A673 (cell line): ENCODE measurements at regions of chr11 and their contacts with region 1.

Region 1: GRCh38 chr11:6705905-6706535 is 22.9 kb upstream of the MRPL17 start:
- DNase-seq: peak; percentile 77
- H3K4me3 ChIP-seq: no peak overlapping the region
- H3K27ac ChIP-seq: no peak overlapping the region
- H3K4me1 ChIP-seq: peaks cover 13% of the 10 kb centered on the region
- H3K27me3 ChIP-seq: no peaks in the 10 kb centered on the region
- CTCF ChIP-seq: peak; percentile 86

Region 2: DNA sequence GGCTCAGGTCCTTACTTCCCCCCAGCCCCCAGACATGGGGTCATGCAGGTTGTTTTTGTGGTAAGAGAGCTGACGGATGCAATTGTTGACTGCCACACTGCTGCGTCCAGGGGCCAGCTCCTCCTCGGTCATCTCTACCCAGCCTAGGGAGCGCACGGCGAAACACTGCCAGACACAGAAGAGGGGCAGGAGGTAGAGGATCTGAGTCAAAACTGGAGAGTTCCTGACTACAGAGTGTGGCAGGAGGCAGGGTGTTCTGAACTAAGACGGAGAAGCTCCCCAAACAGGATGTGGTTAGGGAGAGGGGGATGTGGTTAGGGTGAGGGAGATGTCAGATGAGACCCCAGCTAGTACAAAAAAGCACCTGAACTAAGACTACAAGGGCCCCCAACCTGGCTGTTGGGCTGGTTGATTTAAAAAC is 303.4 kb before region 1 on chr11:
- CTCF ChIA-PET with region 1: no interaction called
- POLR2A ChIA-PET with region 1: no interaction called
- intact Hi-C with region 1: no loop called
- DNase-seq: no peak
- H3K4me3 ChIP-seq: no peak overlapping the region
- H3K27ac ChIP-seq: no peak overlapping the region
- H3K4me1 ChIP-seq: peaks cover 11% of the 10 kb centered on the region
- H3K27me3 ChIP-seq: no peaks in the 10 kb centered on the region
- CTCF ChIP-seq: no peak

Region 3: GRCh38 chr11:6757373-6757967 is 51.5 kb after region 1 on chr11:
- CTCF ChIA-PET with region 1: no interaction called
- POLR2A ChIA-PET with region 1: no interaction called
- intact Hi-C with region 1: loop called (anchors 2 kb)
- DNase-seq: peak; percentile 69
- H3K4me3 ChIP-seq: no peak overlapping the region
- H3K27ac ChIP-seq: no peak overlapping the region
- H3K4me1 ChIP-seq: no peaks in the 10 kb centered on the region
- H3K27me3 ChIP-seq: no peaks in the 10 kb centered on the region
- CTCF ChIP-seq: peak; percentile 66